ENCODE measurements at regions of chr19 and their contacts with region 1.

Region 1: DNA sequence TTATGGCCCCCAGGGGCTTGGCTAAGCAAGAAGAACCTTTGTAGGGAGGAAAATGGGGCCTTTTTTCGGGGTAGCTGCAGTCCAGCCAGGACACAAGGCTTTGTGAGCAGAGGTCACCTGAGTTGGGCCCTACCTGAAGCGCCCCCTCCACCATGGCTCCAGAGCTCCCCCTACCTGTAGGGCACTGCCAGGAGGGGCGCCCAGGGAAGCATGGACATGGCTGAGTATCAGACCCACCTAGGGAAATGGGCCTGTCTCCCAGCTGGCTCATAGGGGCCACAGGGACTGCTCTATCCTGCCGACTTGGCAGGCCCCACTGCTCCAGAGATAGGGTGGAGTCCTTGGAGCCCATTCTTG is 9.0 kb upstream of the CEBPA start:
- DNase-seq: no peak
- H3K4me3 ChIP-seq: no peak overlapping the region
- H3K27ac ChIP-seq: peak overlapping the region in 1 of 2 donors; percentile 36
- H3K4me1 ChIP-seq: no peaks in the 10 kb centered on the region
- H3K27me3 ChIP-seq: no peaks in the 10 kb centered on the region
- CTCF ChIP-seq: no peak
- POLR2A ChIP-seq: no peak

Region 2: GRCh38 chr19:33270769-33271168 is 40.5 kb before region 1 on chr19:
- intact Hi-C with region 1: loop called (anchors 1 kb)
- DNase-seq: no peak
- H3K4me3 ChIP-seq: no peak overlapping the region
- H3K27ac ChIP-seq: no peak overlapping the region
- H3K4me1 ChIP-seq: peaks cover 0 to 7% of the 10 kb centered on the region in 2 donors
- H3K27me3 ChIP-seq: no peaks in the 10 kb centered on the region
- CTCF ChIP-seq: no peak
- POLR2A ChIP-seq: no peak

Region 3: DNA sequence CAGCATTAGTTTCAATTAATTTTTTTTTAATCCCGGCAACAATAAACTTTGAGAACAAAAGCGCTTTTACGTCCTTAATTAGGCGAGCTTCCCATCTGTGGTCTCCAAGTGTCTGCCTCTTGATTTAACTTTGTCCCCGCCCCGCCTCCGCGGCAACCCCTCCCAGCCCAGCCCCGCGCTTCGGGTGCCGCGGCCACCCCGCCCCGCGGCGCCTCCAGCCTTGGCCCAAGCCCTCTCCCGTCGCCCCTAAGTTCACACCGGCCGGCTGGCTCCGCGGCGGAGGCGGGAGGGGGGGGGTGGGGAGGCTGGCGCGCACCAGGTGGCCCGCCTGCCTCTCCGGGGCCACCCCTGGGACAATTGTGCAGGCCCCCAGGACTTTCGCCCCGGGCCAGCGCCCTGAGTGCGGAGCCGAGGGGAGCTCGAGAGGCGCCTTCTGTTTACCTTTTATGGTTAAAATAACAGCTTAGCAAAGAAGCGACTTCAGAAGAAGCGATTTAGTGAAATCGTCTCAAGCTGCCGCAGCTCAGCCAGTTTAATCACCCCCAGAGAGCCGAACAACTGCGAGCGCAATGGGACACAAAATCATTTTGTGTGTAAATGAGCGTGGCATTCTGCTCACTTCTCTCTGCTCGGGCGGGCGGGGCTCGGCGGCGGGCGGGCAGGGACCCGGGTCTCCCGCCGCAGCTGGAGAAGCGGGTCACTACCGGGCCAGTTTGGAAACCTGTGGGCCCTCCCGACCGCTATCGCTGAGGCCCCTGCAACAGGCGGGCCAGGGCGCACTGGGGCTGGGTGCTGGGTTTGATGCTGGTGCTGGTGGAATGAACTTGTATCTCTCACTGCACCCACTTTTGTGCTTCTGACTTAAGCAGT is 486.7 kb after region 1 on chr19:
- intact Hi-C with region 1: no loop called
- DNase-seq: no peak
- H3K4me3 ChIP-seq: peak overlapping the region; percentile 61 to 99 (median 86)
- H3K27ac ChIP-seq: peak overlapping the region; percentile 95 to 99
- H3K4me1 ChIP-seq: peaks cover 6 to 7% of the 10 kb centered on the region in 2 donors
- H3K27me3 ChIP-seq: no peaks in the 10 kb centered on the region
- CTCF ChIP-seq: no peak
- POLR2A ChIP-seq: no peak

Measured in breast epithelium (tissue), 4 donors.